Activated T-helper 1 cell treated with anti-CD3 and anti-CD28 coated beads, Interleukin-12 subunit alpha, Interleukin-12 subunit beta, Interleukin-2, Interleukin-4 antibody, amounts not matched to agents 30 ng/mL and 10 ng/mL and 1 ng/mL, durations not matched to agents 14 hours and 24 hours and 36 hours (primary cell): ENCODE measurements at regions of chr3 and their contacts with region 1.

Region 1: DNA sequence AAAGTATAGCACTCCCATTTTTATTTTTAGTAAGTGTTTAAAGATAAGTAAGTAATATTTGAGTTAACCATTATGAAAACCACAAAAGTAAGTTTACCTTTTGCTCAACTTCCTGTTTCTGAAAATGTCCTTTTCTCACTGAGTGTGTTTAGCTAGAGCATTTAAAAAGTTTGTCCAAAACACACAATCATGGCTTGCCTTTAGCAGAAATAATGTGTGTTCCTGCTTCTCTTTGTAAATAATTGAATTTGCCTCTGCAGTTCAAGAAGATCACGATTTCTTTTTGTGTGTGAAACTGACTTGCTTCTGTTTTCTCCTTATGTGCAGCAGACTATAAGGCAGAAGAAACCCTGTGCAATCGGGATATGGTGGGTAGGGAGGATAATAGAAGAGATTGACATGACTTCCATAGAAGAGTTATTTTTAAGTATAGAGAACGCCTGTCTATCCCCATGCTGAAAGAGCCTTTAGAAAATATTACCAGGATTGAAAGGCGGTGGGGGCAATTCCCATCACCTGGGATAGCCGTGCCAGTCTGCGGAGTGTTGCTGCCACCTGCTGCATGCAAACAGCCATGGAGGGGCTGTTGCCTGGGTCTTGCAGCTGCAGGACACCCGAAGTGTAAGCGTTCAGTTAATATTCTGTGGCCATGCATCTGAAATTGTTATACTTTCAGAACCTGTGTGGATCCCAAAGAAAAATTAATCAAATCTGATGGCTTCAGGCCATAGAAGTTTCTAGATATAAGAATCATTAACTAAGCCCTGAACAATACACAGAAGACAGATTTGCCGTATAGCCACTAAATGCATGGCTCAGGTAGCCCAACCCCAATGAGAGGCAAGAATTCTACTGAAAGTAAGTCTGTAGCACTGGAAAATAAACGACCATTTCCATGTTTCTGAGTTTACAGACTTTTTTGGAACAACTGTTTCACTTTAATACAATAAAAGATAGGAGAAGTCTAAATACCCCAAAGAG is 2.4 kb upstream of the CD96 start:
- DNase-seq: peak; percentile 36
- H3K4me3 Mint-ChIP-seq: peak overlapping the region; percentile 77
- H3K27ac Mint-ChIP-seq: peak overlapping the region; percentile 80
- H3K4me1 Mint-ChIP-seq: peaks cover 75% of the 10 kb centered on the region
- H3K27me3 Mint-ChIP-seq: no peaks in the 10 kb centered on the region

Region 2: GRCh38 chr3:110814170-110815007 is 725.3 kb before region 1 on chr3:
- intact Hi-C with region 1: loop called (anchors 1 kb)
- DNase-seq: peak; percentile 9
- H3K4me3 Mint-ChIP-seq: peak overlapping the region; percentile 37
- H3K27ac Mint-ChIP-seq: peak overlapping the region; percentile 70
- H3K4me1 Mint-ChIP-seq: peaks cover 22% of the 10 kb centered on the region
- H3K27me3 Mint-ChIP-seq: peaks cover 11% of the 10 kb centered on the region

Region 3: DNA sequence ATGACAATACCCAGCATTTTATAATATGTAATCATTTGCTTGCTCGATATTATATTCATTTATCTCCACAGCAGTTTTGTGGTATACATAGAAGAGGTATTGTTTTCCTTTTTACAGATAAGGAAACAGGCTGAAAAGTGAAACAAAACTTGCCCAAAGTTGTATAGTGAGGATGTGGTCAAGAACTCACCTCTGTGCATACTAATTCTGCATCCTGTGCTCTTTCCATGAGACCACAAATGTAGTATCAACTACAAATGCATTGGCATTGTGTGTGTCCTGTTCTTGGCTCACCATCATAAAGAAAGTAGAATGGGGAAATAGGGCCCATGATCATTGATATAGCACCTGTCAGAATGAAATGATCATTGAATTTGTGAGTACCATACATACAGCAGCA is 300.8 kb before region 1 on chr3:
- intact Hi-C with region 1: loop called (anchors 1 kb)
- DNase-seq: peak; percentile 48
- H3K4me3 Mint-ChIP-seq: peak overlapping the region; percentile 69
- H3K27ac Mint-ChIP-seq: peak overlapping the region; percentile 76
- H3K4me1 Mint-ChIP-seq: peaks cover 49% of the 10 kb centered on the region
- H3K27me3 Mint-ChIP-seq: no peaks in the 10 kb centered on the region

Region 4: GRCh38 chr3:111326144-111326995 is 213.3 kb before region 1 on chr3:
- intact Hi-C with region 1: loop called (anchors 1 kb)
- DNase-seq: no peak
- H3K4me3 Mint-ChIP-seq: no peak overlapping the region
- H3K27ac Mint-ChIP-seq: peak overlapping the region; percentile 38
- H3K4me1 Mint-ChIP-seq: peaks cover 36% of the 10 kb centered on the region
- H3K27me3 Mint-ChIP-seq: no peaks in the 10 kb centered on the region

Region 5: DNA sequence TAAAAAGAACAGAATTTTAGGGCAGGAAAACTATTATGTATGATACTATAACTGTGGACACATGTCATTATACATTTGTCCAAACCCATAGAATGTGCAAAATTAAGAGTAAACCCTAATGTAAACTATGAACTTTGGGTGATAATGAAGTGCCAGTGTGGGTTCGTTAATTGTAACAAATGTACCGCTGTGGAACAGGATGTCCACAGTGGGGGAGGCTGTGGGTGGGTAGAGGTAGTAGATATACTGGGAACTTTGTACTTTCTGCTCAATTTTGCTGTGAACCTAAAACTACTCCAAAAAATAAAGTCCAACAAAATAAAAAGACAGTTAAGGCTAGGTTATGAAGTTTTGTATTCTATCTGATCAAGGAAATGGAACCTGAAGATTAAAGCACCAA is 27.2 kb after region 1 on chr3:
- intact Hi-C with region 1: no loop called
- DNase-seq: no peak
- H3K4me3 Mint-ChIP-seq: no peak overlapping the region
- H3K27ac Mint-ChIP-seq: no peak overlapping the region
- H3K4me1 Mint-ChIP-seq: peaks cover 70% of the 10 kb centered on the region
- H3K27me3 Mint-ChIP-seq: no peaks in the 10 kb centered on the region

Region 6: GRCh38 chr3:111577794-111578685 is 38.4 kb after region 1 on chr3:
- intact Hi-C with region 1: loop called (anchors 1 kb)
- DNase-seq: no peak
- H3K4me3 Mint-ChIP-seq: peak overlapping the region; percentile 1
- H3K27ac Mint-ChIP-seq: peak overlapping the region; percentile 70
- H3K4me1 Mint-ChIP-seq: peaks cover 82% of the 10 kb centered on the region
- H3K27me3 Mint-ChIP-seq: no peaks in the 10 kb centered on the region

Region 7: GRCh38 chr3:111616417-111617105 is 76.9 kb after region 1 on chr3:
- intact Hi-C with region 1: loop called (anchors 1 kb)
- DNase-seq: peak; percentile 61
- H3K4me3 Mint-ChIP-seq: peak overlapping the region; percentile 70
- H3K27ac Mint-ChIP-seq: peak overlapping the region; percentile 98
- H3K4me1 Mint-ChIP-seq: peaks cover 84% of the 10 kb centered on the region
- H3K27me3 Mint-ChIP-seq: no peaks in the 10 kb centered on the region